HEK293 (cell line): ENCODE measurements at regions of chr6 and their contacts with region 1.

Region 1: GRCh38 chr6:10465629-10466504 is 51.0 kb upstream of the TFAP2A start:
- H3K4me3 ChIP-seq: no peak overlapping the region
- H3K27ac ChIP-seq: no peak overlapping the region
- H3K4me1 ChIP-seq: no peaks in the 10 kb centered on the region
- CTCF ChIP-seq: no peak

Region 2: GRCh38 chr6:10451828-10452509 is 13.9 kb before region 1 on chr6:
- CTCF ChIA-PET with region 1: interaction called, 20 read pairs
- POLR2A ChIA-PET with region 1: no interaction called
- H3K4me3 ChIP-seq: no peak overlapping the region
- H3K27ac ChIP-seq: no peak overlapping the region
- H3K4me1 ChIP-seq: no peaks in the 10 kb centered on the region
- CTCF ChIP-seq: no peak